RWPE1 (cell line): ENCODE measurements at regions of chr9 and their contacts with region 1.

Region 1: GRCh38 chr9:136488247-136489214 is 5.7 kb upstream of the SEC16A start:
- DNase-seq: peak; percentile 73
- H3K27ac ChIP-seq: 0 out of 2 replicates have a peak overlapping the region, but pooled peaks have one; percentile 2
- CTCF ChIP-seq: peak; percentile 100

Region 2: GRCh38 chr9:136502942-136503550 is 14.5 kb after region 1 on chr9:
- CTCF ChIA-PET with region 1: interaction called, 13 read pairs
- POLR2A ChIA-PET with region 1: no interaction called
- DNase-seq: no peak
- H3K27ac ChIP-seq: peak overlapping the region; percentile 37
- CTCF ChIP-seq: 0 out of 2 replicates have a peak, but pooled peaks have one; percentile 9